T-cell (primary cell): ENCODE measurements at regions of chr3 and their contacts with region 1.

Region 1: DNA sequence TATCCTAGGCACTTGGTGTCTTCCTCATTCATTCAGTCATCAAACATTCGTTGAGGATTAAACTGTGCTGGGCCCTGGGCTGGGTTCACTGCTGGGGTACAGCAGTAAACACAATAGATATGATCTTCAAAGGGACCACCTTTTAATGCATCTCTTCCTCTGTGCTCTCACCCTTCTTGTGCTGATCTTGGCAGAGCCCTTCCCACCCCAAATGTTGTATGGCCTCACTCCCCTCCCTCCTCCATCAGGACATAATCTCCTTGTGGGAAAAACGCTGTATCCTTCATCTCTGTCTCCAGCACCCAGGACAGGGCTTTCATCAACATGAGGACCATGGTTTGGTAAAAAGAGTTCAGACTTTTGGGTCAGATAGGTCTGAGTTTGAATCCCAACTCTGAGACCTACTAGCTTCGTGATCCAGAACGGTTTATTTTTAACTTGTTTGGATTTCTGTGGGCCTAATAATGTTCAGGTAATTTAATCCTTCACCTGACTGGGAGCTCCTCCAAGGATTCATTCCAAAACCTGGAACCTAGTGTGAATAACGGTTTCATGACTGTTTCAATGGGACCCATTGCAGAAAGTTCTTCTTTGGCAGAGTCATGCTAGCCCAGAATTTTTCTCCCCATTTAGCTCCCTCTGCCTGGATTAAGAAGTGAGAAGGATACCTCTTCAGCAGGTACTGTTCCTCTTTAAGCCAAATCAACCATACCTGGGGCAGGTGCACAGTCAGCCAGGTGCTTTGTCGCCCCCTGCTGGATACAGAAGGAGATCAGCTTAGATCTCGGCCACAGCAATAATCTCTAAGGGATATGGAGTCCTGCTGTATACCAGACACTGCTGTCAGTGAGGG is 5.2 kb upstream of the WNT7A start:
- DNase-seq: peak; percentile 46 to 88 (median 67)
- ATAC-seq: peak; percentile 58 to 77 (median 63)
- H3K4me3 ChIP-seq: no peak overlapping the region
- H3K4me3 Mint-ChIP-seq: no peak overlapping the region
- H3K27ac ChIP-seq: no peak overlapping the region
- H3K27ac Mint-ChIP-seq: no peak overlapping the region
- H3K4me1 ChIP-seq: peaks cover 4 to 15% of the 10 kb centered on the region in 2 experiments
- H3K4me1 Mint-ChIP-seq: peaks cover 3 to 19% (median 13%) of the 10 kb centered on the region in 3 donors
- H3K27me3 ChIP-seq: peaks cover 8 to 32% of the 10 kb centered on the region in 2 experiments
- H3K27me3 Mint-ChIP-seq: peaks cover 21 to 29% of the 10 kb centered on the region in 2 donors

Region 2: GRCh38 chr3:13648060-13649001 is 236.7 kb before region 1 on chr3:
- CTCF ChIA-PET with region 1: interaction called in 1 of 2 experiments, 20 read pairs
- POLR2A ChIA-PET with region 1: no interaction called
- DNase-seq: peak; percentile 41 to 87 (median 66)
- ATAC-seq: peak; percentile 46 to 57 (median 54)
- H3K4me3 ChIP-seq: peak overlapping the region in 1 of 2 donors; percentile 40
- H3K4me3 Mint-ChIP-seq: peak overlapping the region in 1 of 3 donors; percentile 34
- H3K27ac ChIP-seq: no peak overlapping the region
- H3K27ac Mint-ChIP-seq: no peak overlapping the region
- H3K4me1 ChIP-seq: peaks cover 5 to 45% of the 10 kb centered on the region in 2 experiments
- H3K4me1 Mint-ChIP-seq: peaks cover 27 to 45% (median 38%) of the 10 kb centered on the region in 3 donors
- H3K27me3 ChIP-seq: peaks cover 0 to 43% of the 10 kb centered on the region in 2 experiments
- H3K27me3 Mint-ChIP-seq: peaks cover 11 to 25% of the 10 kb centered on the region in 2 donors

Region 3: GRCh38 chr3:13657660-13658435 is 227.2 kb before region 1 on chr3:
- CTCF ChIA-PET with region 1: interaction called, 39 read pairs
- POLR2A ChIA-PET with region 1: no interaction called
- DNase-seq: peak; percentile 26 to 84 (median 63)
- ATAC-seq: peak; percentile 72 to 85 (median 78)
- H3K4me3 ChIP-seq: no peak overlapping the region
- H3K4me3 Mint-ChIP-seq: no peak overlapping the region
- H3K27ac ChIP-seq: no peak overlapping the region
- H3K27ac Mint-ChIP-seq: no peak overlapping the region
- H3K4me1 ChIP-seq: peaks cover 5 to 38% of the 10 kb centered on the region in 2 experiments
- H3K4me1 Mint-ChIP-seq: peaks cover 27 to 32% (median 32%) of the 10 kb centered on the region in 3 donors
- H3K27me3 ChIP-seq: peaks cover 3 to 47% of the 10 kb centered on the region in 2 experiments
- H3K27me3 Mint-ChIP-seq: peaks cover 0 to 15% of the 10 kb centered on the region in 2 donors

Region 4: GRCh38 chr3:13836741-13837480 is 48.2 kb before region 1 on chr3:
- CTCF ChIA-PET with region 1: no interaction called
- POLR2A ChIA-PET with region 1: no interaction called
- DNase-seq: no peak
- ATAC-seq: no peak
- H3K4me3 ChIP-seq: no peak overlapping the region
- H3K4me3 Mint-ChIP-seq: no peak overlapping the region
- H3K27ac ChIP-seq: no peak overlapping the region
- H3K27ac Mint-ChIP-seq: no peak overlapping the region
- H3K4me1 ChIP-seq: no peaks in the 10 kb centered on the region
- H3K4me1 Mint-ChIP-seq: peaks cover 2 to 18% (median 12%) of the 10 kb centered on the region in 3 donors
- H3K27me3 ChIP-seq: peaks cover 0 to 10% of the 10 kb centered on the region in 2 experiments
- H3K27me3 Mint-ChIP-seq: no peaks in the 10 kb centered on the region

Region 5: DNA sequence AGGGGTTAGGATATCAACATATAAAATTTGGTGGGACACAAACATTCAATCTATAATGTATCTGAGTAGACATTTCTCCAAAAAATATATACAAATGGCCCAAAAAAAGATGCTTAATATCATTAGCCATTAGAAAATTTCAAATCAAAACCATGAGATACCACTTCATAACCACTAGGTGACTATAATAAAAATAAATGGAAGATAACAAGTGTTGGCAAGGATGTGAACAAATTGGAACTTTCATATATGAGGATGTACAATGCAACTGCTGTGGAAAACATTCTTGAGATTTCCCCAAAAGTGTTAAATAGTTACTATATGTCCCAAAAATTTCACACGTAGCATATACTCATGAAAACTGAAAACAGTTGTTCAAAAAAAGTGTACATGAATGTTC is 31.3 kb after region 1 on chr3:
- CTCF ChIA-PET with region 1: no interaction called
- POLR2A ChIA-PET with region 1: no interaction called
- DNase-seq: no peak
- ATAC-seq: no peak
- H3K4me3 ChIP-seq: no peak overlapping the region
- H3K4me3 Mint-ChIP-seq: no peak overlapping the region
- H3K27ac ChIP-seq: no peak overlapping the region
- H3K27ac Mint-ChIP-seq: no peak overlapping the region
- H3K4me1 ChIP-seq: no peaks in the 10 kb centered on the region
- H3K4me1 Mint-ChIP-seq: no peaks in the 10 kb centered on the region
- H3K27me3 ChIP-seq: no peaks in the 10 kb centered on the region
- H3K27me3 Mint-ChIP-seq: no peaks in the 10 kb centered on the region